PC-9 (cell line): ENCODE measurements at regions of chr17 and their contacts with region 1.

Region 1: GRCh38 chr17:35046740-35047283 is 16.7 kb downstream of the RFFL start:
- DNase-seq: peak; percentile 24 to 59
- H3K4me3 ChIP-seq: peak overlapping the region; percentile 25; the same call in 1 of the 2 replicates
- H3K27ac ChIP-seq: peak overlapping the region; percentile 62
- H3K4me1 ChIP-seq: peaks cover 22% of the 10 kb centered on the region
- H3K27me3 ChIP-seq: no peaks in the 10 kb centered on the region
- CTCF ChIP-seq: no peak

Region 2: DNA sequence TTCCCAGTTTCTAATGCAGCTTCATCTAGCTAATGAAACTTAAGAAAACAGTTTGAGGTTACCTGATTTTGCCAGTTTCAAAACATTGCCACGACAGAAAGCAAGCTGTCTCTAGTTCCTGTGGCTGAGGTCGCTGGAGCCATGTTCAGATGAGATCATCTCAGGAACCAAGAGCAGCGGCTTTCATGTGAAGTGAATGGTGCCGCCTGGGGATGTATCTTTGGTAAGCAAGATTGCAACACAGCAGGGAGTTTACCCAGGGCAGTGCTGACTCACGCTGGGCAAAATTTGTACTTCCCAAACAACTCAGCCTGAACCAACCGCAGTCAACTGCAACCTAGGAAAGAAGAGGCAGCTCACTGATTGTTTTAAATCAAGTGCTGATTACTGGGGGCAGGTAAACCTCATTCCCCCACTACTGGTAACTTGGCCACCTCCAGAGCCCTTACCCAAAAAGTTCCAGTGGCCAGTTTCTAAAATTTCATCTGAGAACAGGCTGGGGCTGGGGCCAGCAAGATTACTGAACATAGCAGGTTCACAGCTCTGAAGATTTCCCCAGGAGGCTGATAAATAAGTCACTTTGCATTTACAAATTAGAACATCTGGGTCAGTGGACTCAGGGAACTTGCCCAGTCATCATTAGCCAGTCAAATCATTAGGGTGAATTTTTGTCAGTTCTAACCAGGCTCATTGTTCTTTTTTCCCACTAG is 16.9 kb after region 1 on chr17 and contains the start of gene RFFL:
- CTCF ChIA-PET with region 1: interaction called, 4 read pairs
- POLR2A ChIA-PET with region 1: interaction called, 13 read pairs
- intact Hi-C with region 1: no loop called
- DNase-seq: peak; percentile 79 to 96
- H3K4me3 ChIP-seq: peak within 1 kb of the TSS; percentile 44; the same call in 1 of the 2 replicates
- H3K27ac ChIP-seq: peak within 1 kb of the TSS; percentile 99
- H3K4me1 ChIP-seq: peaks cover 37% of the 10 kb centered on the region
- H3K27me3 ChIP-seq: no peaks in the 10 kb centered on the region
- CTCF ChIP-seq: no peak
- total RNA-seq, gene RFFL: 36.7 and 38.1 TPM in 2 replicates

Region 3: DNA sequence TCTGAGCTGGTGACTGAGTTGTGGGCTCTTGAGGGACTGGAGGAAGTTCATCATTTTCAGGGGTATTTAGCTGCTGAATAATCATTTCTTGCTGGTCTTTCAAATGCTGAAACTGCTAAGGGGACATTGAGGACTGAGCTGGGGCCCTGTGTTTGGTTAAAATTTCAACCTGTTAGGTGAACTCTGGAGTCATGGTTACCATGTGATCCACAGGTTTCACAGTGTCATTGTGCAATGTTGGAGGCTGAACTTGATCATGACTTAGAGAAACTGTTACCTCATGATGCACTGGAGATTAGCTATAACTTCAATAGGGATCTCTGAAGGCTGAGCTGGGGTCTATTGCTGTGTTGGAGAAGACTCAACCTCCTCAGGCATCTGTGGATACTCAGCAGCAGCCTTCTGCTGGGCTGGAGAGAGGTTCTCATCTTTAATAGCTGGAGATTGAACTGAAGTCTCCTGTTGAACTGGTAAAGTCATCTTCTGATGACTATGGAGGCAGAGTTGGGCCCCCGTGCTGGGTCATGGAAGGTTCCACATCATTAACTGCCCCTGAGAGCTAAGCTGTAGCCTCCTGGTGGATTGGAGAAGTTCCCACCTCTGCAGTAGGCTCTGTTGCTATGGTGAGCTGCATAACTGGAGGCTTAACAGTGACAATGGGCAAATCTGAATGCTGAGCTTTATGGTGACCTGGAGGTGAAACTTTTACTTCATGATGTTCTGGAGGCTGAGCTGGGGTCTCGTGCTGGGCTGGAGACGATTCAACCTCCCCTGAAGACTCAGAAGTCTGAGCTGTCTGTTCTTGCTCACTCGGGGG is 868.5 kb after region 1 on chr17:
- CTCF ChIA-PET with region 1: no interaction called
- POLR2A ChIA-PET with region 1: no interaction called
- intact Hi-C with region 1: no loop called
- DNase-seq: no peak
- H3K4me3 ChIP-seq: no peak overlapping the region
- H3K27ac ChIP-seq: no peak overlapping the region
- H3K4me1 ChIP-seq: no peaks in the 10 kb centered on the region
- H3K27me3 ChIP-seq: peaks cover 12% of the 10 kb centered on the region; the same call in 1 of the 2 replicates
- CTCF ChIP-seq: no peak